Gastrocnemius medialis (tissue), 4 donors: ENCODE measurements at regions of chr17 and their contacts with region 1.

Region 1: DNA sequence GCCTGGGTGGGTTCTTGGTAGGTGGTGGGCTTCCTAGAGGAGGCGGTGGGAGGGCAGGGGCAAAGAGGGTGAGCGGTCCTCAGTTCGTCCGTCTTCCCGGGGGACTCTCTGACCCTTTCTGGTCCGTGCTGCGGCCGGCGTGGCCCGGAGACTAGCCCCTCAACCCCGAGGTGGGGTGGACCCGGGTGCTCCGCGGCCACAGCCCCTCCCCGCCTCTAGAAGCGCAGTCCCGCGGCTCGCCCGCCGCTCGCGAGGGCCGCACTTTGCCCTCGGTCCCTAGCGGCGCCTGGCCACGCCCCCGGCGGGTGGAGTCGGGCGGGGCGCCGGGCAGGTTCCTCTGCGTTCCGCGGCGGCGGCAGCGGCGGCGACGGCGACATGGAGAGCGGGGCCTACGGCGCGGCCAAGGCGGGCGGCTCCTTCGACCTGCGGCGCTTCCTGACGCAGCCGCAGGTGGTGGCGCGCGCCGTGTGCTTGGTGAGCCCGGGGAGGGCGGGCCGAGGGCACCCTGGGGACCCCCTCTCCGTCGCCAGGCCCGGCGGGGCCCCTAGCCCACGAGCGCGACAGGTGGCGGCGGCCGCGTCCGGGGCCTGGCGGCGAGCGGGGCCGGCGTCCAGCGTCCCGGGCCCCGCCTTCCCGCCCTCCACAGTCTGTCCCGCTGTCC is at the start of gene SYNGR2:
- DNase-seq: peak; percentile 57 to 77
- ATAC-seq: peak; percentile 69 to 71
- H3K4me3 ChIP-seq: peak within 1 kb of the TSS; percentile 77 to 94 (median 86)
- H3K27ac ChIP-seq: peak within 1 kb of the TSS; percentile 92 to 96 (median 94)
- H3K4me1 ChIP-seq: peaks cover 21 to 40% of the 10 kb centered on the region in 2 donors
- H3K27me3 ChIP-seq: no peaks in the 10 kb centered on the region
- CTCF ChIP-seq: peak in 2 of 5 experiments; percentile 16 to 27
- POLR2A ChIP-seq: peak; percentile 96 to 98
- total RNA-seq, gene SYNGR2: 104 to 218 (median 163) TPM

Region 2: DNA sequence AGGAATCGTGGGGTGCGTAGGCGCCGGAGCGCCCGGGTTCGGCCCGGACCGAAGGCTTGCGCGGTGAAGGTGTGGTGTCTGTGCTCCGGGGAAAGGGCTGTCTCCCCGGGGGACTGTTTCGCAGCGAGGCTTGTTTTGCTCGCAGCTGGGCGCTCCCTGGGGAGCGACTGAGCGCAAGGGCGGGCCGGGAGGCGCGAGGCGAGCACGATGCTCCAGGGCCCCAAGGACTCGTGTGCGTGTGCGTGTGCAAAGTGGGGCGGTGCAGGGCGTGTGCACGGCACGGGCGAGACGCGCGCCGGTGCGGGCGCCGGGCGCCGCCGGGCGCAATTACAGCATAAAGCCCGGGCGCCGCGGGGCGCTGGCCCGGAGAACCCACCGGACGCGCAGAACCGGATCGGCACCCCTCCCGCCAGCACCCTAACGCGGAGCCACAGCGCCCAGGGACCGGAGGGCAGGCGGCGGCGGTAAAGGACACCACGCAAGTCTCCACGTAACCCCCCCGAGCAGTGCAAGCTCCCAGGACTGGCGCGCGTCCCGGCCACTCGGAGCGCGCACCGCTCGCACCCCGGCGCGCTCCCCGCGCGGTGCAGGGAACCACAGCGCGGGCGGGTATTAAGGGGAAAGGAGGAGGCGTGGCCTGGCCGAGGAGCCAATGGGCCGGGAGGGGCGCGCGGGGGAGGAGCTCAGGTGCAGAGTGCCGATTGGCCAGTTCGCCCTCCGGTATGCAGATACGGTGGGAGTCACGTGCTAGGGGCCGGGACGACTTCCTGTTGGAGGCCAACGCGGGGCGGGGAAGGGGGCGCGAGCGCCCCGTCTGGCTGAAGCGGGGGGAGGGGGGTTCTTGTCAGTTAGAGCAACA is 210.3 kb before region 1 on chr17 and contains the start of gene TNRC6C:
- in situ Hi-C with region 1: no loop called
- intact Hi-C with region 1: no loop called
- DNase-seq: peak; percentile 100
- ATAC-seq: peak; percentile 87 to 90
- H3K4me3 ChIP-seq: peak within 1 kb of the TSS; percentile 65 to 99 (median 67)
- H3K27ac ChIP-seq: peak within 1 kb of the TSS; percentile 80 to 90 (median 84)
- H3K4me1 ChIP-seq: peaks cover 33 to 37% of the 10 kb centered on the region in 2 donors
- H3K27me3 ChIP-seq: no peaks in the 10 kb centered on the region
- CTCF ChIP-seq: peak in 4 of 5 experiments; percentile 23 to 35 (median 30)
- POLR2A ChIP-seq: peak; percentile 100
- total RNA-seq, gene TNRC6C: 4.7 to 9.0 (median 7.6) TPM

Region 3: GRCh38 chr17:78186692-78187595 is 18.6 kb after region 1 on chr17 and contains the starts of genes AFMID and TK1:
- in situ Hi-C with region 1: no loop called
- intact Hi-C with region 1: loop called (anchors 1 kb)
- DNase-seq: peak; percentile 93 to 96
- ATAC-seq: peak; percentile 94 to 97
- H3K4me3 ChIP-seq: peak within 1 kb of the TSS; percentile 51 to 71 (median 58)
- H3K27ac ChIP-seq: peak within 1 kb of the TSS; percentile 51 to 75 (median 64)
- H3K4me1 ChIP-seq: peaks cover 15 to 17% of the 10 kb centered on the region in 2 donors
- H3K27me3 ChIP-seq: no peaks in the 10 kb centered on the region
- CTCF ChIP-seq: peak; percentile 85 to 94 (median 91)
- POLR2A ChIP-seq: peak; percentile 33 to 81
- total RNA-seq, gene AFMID: 11.7 to 14.3 (median 12.1) TPM
- total RNA-seq, gene TK1: 0.22 to 2.1 (median 0.60) TPM

Region 4: DNA sequence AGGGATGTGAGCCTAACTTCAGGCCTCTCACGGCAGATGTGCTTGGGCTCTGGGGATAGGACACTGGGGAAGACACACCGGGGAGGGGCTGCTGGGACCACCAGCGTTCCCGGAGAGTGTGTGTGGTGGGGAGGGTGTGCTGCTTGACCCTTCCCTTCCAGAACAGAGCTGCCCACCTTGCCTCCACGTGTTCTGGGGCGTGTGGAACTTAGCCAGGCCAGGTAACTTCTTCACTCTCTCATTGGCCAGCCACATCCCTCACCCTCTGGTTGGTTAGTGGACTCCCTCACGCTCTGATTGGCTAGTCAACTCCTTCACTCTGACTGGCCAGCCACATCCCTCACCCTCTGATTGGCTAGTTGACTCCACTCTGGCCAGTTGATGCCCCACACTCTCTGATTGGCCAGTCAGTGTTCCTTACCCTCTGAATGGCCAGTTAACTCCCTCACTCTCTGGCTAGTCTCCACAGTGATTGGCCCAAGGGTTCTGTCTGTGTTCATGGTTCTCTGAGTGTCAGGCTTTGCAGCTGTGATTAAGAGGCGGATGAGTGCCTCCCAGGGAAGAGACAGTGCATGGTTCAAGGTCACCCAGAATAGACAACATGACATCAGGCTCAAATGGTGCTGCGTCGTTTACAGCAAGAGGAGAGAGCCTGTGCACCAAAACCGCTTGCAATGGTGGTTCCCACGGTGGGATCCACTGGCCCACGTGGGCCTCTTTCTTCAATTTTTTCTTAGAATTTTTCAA is 73.1 kb after region 1 on chr17:
- in situ Hi-C with region 1: no loop called
- intact Hi-C with region 1: no loop called
- DNase-seq: no peak
- ATAC-seq: no peak
- H3K4me3 ChIP-seq: no peak overlapping the region
- H3K27ac ChIP-seq: no peak overlapping the region
- H3K4me1 ChIP-seq: peaks cover 0 to 4% of the 10 kb centered on the region in 2 donors
- H3K27me3 ChIP-seq: no peaks in the 10 kb centered on the region
- CTCF ChIP-seq: no peak
- POLR2A ChIP-seq: no peak